B cell (primary cell): ENCODE measurements at regions of chr10 and their contacts with region 1.

Region 1: DNA sequence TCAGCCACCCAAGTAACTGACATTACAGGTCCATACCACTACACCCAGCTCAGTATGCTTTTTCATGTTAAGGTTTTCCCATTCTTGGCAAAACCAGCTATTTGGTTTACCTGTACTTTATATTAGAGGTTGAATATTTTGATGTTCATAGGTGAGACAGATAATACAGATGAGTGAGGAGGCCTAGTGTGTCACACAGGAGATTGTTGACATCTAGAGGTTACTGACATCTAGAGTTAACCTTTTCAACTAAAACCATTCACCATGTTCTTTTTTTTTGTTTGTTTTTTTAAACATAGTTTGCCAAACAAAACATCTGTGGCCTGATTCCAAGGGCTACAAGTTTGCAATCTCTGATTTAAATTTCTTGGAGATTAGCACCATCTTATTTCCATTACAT is 8.0 kb downstream of the GHITM start:
- DNase-seq: no peak
- ATAC-seq: no peak
- H3K4me3 ChIP-seq: no peak overlapping the region
- H3K4me3 Mint-ChIP-seq: no peak overlapping the region
- H3K27ac ChIP-seq: peak overlapping the region in 1 of 2 donors; percentile 13
- H3K27ac Mint-ChIP-seq: no peak overlapping the region
- H3K4me1 ChIP-seq: no peaks in the 10 kb centered on the region
- H3K4me1 Mint-ChIP-seq: peaks cover 3% of the 10 kb centered on the region
- H3K27me3 ChIP-seq: no peaks in the 10 kb centered on the region
- H3K27me3 Mint-ChIP-seq: no peaks in the 10 kb centered on the region
- CTCF ChIP-seq: no peak

Region 2: DNA sequence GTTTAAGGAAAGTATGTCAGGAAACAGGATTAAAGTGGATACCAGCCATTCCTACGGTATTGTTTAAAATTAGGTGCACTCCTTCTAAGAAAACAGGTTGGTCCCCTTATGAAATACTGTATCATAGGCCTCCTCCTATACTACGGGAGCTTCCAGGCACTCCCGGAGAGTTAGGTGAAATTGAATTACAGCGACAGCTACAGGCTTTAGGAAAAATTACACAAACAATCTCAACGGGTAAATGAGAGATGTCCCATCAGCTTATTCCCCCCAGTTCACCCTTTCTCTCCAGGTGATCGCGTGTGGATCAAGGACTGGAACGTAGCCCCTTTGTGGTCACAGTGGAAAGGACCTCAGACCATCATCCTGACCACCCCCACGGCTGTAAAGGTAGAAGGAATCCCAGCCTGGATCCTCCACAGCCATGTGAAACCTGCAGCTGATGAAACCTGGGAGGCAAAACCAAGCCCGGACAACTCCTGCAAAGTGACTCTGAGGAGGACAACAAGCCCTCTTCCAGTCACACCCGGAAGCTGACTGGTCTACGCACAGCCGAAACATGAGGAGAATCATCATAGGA is 33.2 kb before region 1 on chr10:
- CTCF ChIA-PET with region 1: no interaction called
- POLR2A ChIA-PET with region 1: no interaction called
- intact Hi-C with region 1: no loop called
- DNase-seq: no peak
- ATAC-seq: no peak
- H3K4me3 ChIP-seq: no peak overlapping the region
- H3K4me3 Mint-ChIP-seq: no peak overlapping the region
- H3K27ac ChIP-seq: no peak overlapping the region
- H3K27ac Mint-ChIP-seq: no peak overlapping the region
- H3K4me1 ChIP-seq: no peaks in the 10 kb centered on the region
- H3K4me1 Mint-ChIP-seq: no peaks in the 10 kb centered on the region
- H3K27me3 ChIP-seq: peaks cover 0 to 2% (median 0%) of the 10 kb centered on the region in 4 experiments
- H3K27me3 Mint-ChIP-seq: peaks cover 18% of the 10 kb centered on the region
- CTCF ChIP-seq: no peak

Region 3: DNA sequence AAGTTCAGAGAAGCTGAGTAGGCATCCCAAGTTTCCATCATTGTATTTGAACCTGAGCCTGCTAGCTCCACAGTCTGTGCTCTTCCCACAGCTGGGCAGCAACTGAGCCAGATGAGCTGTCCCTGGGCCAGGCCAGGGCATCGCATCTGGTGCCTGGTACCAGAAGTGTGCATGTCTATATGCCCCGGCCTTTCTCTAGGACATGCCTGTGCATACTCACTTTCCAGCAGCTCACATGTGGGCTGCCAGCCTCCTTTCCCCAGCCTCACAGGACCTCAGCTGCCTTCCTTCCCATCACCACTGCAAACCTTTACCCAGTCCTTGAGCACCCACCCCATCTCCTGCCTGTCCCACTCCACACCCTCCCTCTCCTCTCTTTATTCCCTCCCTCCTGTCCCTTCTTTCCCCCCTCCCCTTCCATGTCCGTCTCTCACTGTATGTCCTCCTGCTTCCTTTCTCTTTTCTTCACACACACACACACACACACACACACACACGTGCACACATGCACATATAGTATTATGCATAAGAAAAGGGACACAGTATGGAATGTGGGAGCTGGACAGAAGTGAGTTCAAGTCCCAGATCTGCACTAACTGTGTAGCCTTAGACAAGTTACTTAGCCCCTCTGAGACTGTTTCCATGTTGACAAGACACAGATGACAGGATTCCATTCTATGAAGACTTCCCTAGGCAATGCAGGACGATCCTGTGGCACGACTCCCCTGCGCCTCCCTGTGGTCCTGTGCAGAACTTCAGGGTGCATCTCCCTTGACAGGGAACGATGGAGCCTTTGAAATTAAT is 57.9 kb after region 1 on chr10:
- CTCF ChIA-PET with region 1: interaction called, 72 read pairs
- POLR2A ChIA-PET with region 1: no interaction called
- intact Hi-C with region 1: loop called (anchors 1 kb)
- DNase-seq: peak; percentile 67
- ATAC-seq: peak; percentile 84
- H3K4me3 ChIP-seq: no peak overlapping the region
- H3K4me3 Mint-ChIP-seq: no peak overlapping the region
- H3K27ac ChIP-seq: no peak overlapping the region
- H3K27ac Mint-ChIP-seq: no peak overlapping the region
- H3K4me1 ChIP-seq: no peaks in the 10 kb centered on the region
- H3K4me1 Mint-ChIP-seq: no peaks in the 10 kb centered on the region
- H3K27me3 ChIP-seq: peaks cover 0 to 4% (median 2%) of the 10 kb centered on the region in 4 experiments
- H3K27me3 Mint-ChIP-seq: peaks cover 30% of the 10 kb centered on the region
- CTCF ChIP-seq: peak; percentile 77

Region 4: GRCh38 chr10:84214612-84215235 is 67.4 kb after region 1 on chr10:
- CTCF ChIA-PET with region 1: interaction called, 25 read pairs
- POLR2A ChIA-PET with region 1: no interaction called
- intact Hi-C with region 1: no loop called
- DNase-seq: peak; percentile 37
- ATAC-seq: peak; percentile 43
- H3K4me3 ChIP-seq: no peak overlapping the region
- H3K4me3 Mint-ChIP-seq: peak overlapping the region; percentile 37
- H3K27ac ChIP-seq: no peak overlapping the region
- H3K27ac Mint-ChIP-seq: no peak overlapping the region
- H3K4me1 ChIP-seq: no peaks in the 10 kb centered on the region
- H3K4me1 Mint-ChIP-seq: no peaks in the 10 kb centered on the region
- H3K27me3 ChIP-seq: no peaks in the 10 kb centered on the region
- H3K27me3 Mint-ChIP-seq: peaks cover 7% of the 10 kb centered on the region
- CTCF ChIP-seq: peak; percentile 54

Region 5: DNA sequence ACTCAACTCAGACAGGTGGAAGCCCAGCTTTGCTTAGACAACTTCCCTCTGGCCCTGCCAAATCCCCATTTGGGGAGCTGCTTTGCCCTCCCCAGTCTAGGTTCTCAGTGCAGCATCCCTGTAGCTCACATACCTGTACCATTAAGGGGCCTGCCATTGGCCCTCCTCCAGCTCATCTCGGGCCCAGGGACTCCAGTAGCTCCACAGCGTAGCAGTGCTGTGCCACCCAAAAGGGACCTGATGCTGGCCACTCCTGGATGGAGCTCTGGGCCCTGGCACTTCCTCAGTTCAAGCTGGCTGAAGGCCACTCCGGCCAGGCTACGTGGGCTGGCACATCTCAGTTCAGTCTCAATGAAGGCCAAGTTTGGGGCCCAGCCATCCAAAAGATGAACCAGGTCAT is 86.6 kb after region 1 on chr10:
- CTCF ChIA-PET with region 1: no interaction called
- POLR2A ChIA-PET with region 1: no interaction called
- intact Hi-C with region 1: no loop called
- DNase-seq: no peak
- ATAC-seq: no peak
- H3K4me3 ChIP-seq: no peak overlapping the region
- H3K4me3 Mint-ChIP-seq: no peak overlapping the region
- H3K27ac ChIP-seq: no peak overlapping the region
- H3K27ac Mint-ChIP-seq: no peak overlapping the region
- H3K4me1 ChIP-seq: no peaks in the 10 kb centered on the region
- H3K4me1 Mint-ChIP-seq: no peaks in the 10 kb centered on the region
- H3K27me3 ChIP-seq: peaks cover 0 to 6% (median 0%) of the 10 kb centered on the region in 4 experiments
- H3K27me3 Mint-ChIP-seq: peaks cover 25% of the 10 kb centered on the region
- CTCF ChIP-seq: no peak

Region 6: DNA sequence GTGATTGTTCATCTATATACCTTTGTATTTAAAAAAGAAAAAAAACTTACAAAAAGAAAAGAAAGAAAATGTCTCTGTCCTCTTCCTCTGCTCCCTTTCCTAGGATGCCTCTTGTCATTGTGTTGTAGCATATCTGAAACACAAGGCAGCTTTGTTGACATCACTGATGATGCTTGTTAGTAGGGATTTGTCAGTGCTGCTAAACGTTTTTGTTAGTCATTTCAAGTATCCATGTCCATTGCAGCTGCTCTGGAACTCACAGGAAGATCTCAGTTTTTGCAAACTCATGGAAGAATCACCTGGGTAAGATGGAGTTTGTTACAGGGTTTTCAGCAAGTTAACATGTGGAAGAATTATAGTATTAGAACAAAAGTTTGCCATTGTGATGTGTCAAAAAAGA is 304.7 kb after region 1 on chr10:
- CTCF ChIA-PET with region 1: no interaction called
- POLR2A ChIA-PET with region 1: no interaction called
- intact Hi-C with region 1: no loop called
- DNase-seq: no peak
- ATAC-seq: no peak
- H3K4me3 ChIP-seq: no peak overlapping the region
- H3K4me3 Mint-ChIP-seq: no peak overlapping the region
- H3K27ac ChIP-seq: no peak overlapping the region
- H3K27ac Mint-ChIP-seq: no peak overlapping the region
- H3K4me1 ChIP-seq: no peaks in the 10 kb centered on the region
- H3K4me1 Mint-ChIP-seq: no peaks in the 10 kb centered on the region
- H3K27me3 ChIP-seq: no peaks in the 10 kb centered on the region
- H3K27me3 Mint-ChIP-seq: no peaks in the 10 kb centered on the region
- CTCF ChIP-seq: no peak